ENCODE measurements at regions of chr1 and their contacts with region 1.

Region 1: GRCh38 chr1:244180256-244180655 is 129.2 kb downstream of the ZBTB18 start:
- DNase-seq: no peak
- ATAC-seq: no peak

Region 2: GRCh38 chr1:243335292-243335691 is 845.0 kb before region 1 on chr1:
- intact Hi-C with region 1: loop called (anchors 5 kb)
- DNase-seq: no peak
- ATAC-seq: no peak

Region 3: DNA sequence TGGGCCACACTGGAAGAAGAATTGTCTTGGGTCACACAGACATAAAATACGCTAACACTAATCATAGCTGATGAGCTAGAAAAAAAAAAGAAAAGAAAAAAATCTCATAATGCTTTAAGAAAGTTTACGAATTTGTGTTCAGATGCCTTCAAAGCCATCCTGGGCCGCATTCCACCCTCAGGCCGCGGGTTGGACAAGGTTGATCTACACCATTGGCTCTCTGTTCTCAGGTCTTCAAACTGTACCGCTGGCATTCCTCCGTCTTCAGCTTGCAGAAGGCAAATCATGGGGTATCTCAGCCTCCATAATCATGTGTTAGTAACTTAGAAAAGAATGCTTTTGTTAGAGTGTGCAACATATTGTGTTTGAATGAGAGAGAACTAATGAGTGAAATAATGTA is 315.3 kb before region 1 on chr1:
- intact Hi-C with region 1: no loop called
- DNase-seq: no peak
- ATAC-seq: no peak

Region 4: DNA sequence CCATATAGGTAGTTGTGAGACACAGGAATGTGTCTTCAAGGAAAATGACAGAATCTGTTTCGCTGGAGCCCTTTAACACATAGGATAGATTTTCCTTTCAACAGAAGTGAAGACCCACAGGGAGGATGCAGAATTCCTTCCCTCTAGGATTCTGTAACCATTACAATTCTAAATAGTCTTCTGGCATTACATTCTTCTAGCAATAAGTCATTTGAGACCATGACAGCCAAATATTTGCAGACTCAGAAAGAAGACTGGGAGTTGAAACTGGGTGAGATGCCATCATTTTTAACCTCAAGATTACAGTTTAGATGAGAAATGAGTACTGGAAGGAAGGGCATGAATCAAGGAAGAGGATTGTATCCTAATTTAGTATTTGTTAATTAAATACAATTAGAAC is 67.6 kb before region 1 on chr1:
- intact Hi-C with region 1: no loop called
- DNase-seq: no peak
- ATAC-seq: no peak

Measured in left ventricle myocardium superior (tissue), 1 donor.